CD4-positive, alpha-beta T cell (primary cell): ENCODE measurements at regions of chr11 and their contacts with region 1.

Region 1: DNA sequence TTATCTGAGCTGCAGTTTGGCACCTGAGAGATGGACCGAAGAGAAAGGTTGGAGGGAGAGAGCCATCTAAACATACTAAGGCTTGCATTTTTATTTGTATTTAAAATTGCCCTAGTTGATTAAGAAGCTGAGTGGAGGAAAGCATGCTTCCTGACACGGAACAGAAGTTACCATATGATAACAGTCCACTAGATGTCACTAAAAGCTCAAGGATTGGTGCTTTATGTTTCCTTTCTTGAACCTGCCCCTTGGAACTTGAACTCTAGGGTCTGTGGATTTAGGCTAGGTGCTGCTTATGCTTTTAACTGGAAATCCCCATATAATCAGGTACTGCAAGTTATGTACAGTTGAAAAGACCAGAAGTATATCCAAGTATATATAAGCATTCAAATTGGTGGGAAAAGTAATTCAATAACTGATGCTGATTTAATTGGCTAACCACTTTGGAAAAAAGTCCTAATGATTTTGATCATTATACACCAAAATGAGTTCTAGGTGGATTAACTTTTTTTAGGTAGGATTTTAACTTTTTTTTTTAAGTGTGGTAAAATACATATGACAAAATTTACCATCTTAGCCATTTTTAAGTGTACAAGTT is 9.5 kb downstream of the RBMXL2 start:
- DNase-seq: peak in 3 of 14 experiments; percentile 47 to 73 (median 64)
- ATAC-seq: peak; percentile 54
- H3K4me3 ChIP-seq: no peak overlapping the region
- H3K4me3 Mint-ChIP-seq: no peak overlapping the region
- H3K27ac ChIP-seq: no peak overlapping the region
- H3K27ac Mint-ChIP-seq: no peak overlapping the region
- H3K4me1 ChIP-seq: no peaks in the 10 kb centered on the region
- H3K4me1 Mint-ChIP-seq: no peaks in the 10 kb centered on the region
- H3K27me3 ChIP-seq: peaks cover 0 to 30% of the 10 kb centered on the region in 2 experiments
- H3K27me3 Mint-ChIP-seq: peaks cover 31% of the 10 kb centered on the region
- CTCF ChIP-seq: peak; percentile 72

Region 2: DNA sequence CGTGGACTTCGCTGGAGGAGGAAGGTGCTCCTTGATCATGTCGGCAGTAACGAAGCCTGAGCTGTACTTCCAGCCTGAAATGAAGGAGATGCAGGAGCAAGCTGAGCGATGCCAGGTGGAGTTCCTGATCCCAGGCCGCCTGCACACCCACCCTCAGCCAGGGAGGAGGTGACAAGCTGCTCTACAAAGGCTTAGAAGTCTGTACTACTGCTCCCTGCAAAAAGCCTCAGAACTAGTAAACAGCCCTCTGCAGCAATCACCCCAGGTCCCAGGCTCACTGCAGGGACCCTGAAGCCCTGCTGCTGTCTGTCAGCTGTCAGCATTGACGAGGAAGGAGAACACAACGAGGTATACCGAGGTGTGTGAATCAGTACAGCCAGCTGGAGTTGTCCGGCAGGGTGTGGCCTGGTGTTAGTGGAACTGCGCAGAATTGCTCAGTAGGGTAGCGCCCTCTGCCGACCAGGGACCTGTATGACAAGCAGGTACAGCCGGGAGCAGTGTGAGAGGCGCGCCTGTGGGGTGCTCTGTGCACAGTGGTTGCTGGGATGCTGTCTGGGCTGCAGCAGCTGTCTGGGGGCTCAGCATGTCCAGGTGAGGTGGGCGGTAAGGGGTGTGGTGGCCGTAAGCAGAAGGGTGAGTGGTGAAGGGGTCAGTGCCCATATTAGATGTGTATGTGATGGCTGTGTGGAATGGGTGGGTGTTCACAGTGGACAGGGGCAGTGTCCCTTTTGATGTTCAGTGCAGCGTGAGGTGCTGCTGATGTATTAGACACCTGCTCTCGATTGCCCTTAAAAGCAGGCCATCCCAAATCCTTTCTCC is 567.3 kb after region 1 on chr11:
- CTCF ChIA-PET with region 1: interaction called, 3 read pairs
- POLR2A ChIA-PET with region 1: no interaction called
- intact Hi-C with region 1: loop called in 1 of 2 experiments (anchors 1 kb)
- DNase-seq: peak; percentile 39 to 82 (median 60)
- ATAC-seq: peak; percentile 97
- H3K4me3 ChIP-seq: no peak overlapping the region
- H3K4me3 Mint-ChIP-seq: no peak overlapping the region
- H3K27ac ChIP-seq: no peak overlapping the region
- H3K27ac Mint-ChIP-seq: no peak overlapping the region
- H3K4me1 ChIP-seq: no peaks in the 10 kb centered on the region
- H3K4me1 Mint-ChIP-seq: no peaks in the 10 kb centered on the region
- H3K27me3 ChIP-seq: peaks cover 0 to 3% of the 10 kb centered on the region in 2 experiments
- H3K27me3 Mint-ChIP-seq: peaks cover 8% of the 10 kb centered on the region
- CTCF ChIP-seq: peak; percentile 93